Gastrocnemius medialis (tissue), 4 donors: ENCODE measurements at regions of chr12 and their contacts with region 1.

Region 1: GRCh38 chr12:19546611-19547162 is 107.4 kb downstream of the AEBP2 start:
- DNase-seq: no peak
- ATAC-seq: no peak
- H3K4me3 ChIP-seq: peak overlapping the region in 2 of 4 donors; percentile 3 to 29
- H3K27ac ChIP-seq: peak overlapping the region; percentile 24 to 50 (median 44)
- H3K4me1 ChIP-seq: peaks cover 18 to 20% of the 10 kb centered on the region in 2 donors
- H3K27me3 ChIP-seq: no peaks in the 10 kb centered on the region
- CTCF ChIP-seq: no peak
- POLR2A ChIP-seq: no peak

Region 2: GRCh38 chr12:19439059-19440018 is 107.3 kb before region 1 on chr12 and contains the start of gene AEBP2:
- in situ Hi-C with region 1: no loop called
- intact Hi-C with region 1: loop called (anchors 2 kb)
- DNase-seq: peak; percentile 89 to 90
- ATAC-seq: peak; percentile 89 to 91
- H3K4me3 ChIP-seq: peak within 1 kb of the TSS; percentile 83 to 99 (median 93)
- H3K27ac ChIP-seq: peak within 1 kb of the TSS; percentile 85 to 94 (median 90)
- H3K4me1 ChIP-seq: peaks cover 20 to 23% of the 10 kb centered on the region in 2 donors
- H3K27me3 ChIP-seq: no peaks in the 10 kb centered on the region
- CTCF ChIP-seq: no peak
- POLR2A ChIP-seq: peak; percentile 88 to 89
- total RNA-seq, gene AEBP2: 9.2 to 22.2 (median 13.2) TPM